Activated B cell treated with CpG ODN at 0.5 μM for 24 hours (primary cell): ENCODE measurements at regions of chr5 and their contacts with region 1.

Region 1: GRCh38 chr5:150000256-150000989 is at the starts of genes HMGXB3 and TIGD6:
- DNase-seq: peak; percentile 87
- ATAC-seq: peak; percentile 85
- H3K4me3 Mint-ChIP-seq: peak within 1 kb of the TSS; percentile 95
- H3K27ac Mint-ChIP-seq: peak within 1 kb of the TSS; percentile 91
- H3K4me1 Mint-ChIP-seq: peaks cover 28% of the 10 kb centered on the region
- H3K27me3 Mint-ChIP-seq: no peaks in the 10 kb centered on the region
- CTCF ChIP-seq: no peak
- total RNA-seq, gene HMGXB3: 28.5 and 36.8 TPM in 2 replicates
- total RNA-seq, gene TIGD6: 3.5 and 4.2 TPM in 2 replicates

Region 2: GRCh38 chr5:149551200-149552037 is 449.0 kb before region 1 on chr5 and contains the start of gene CSNK1A1:
- CTCF ChIA-PET with region 1: no interaction called
- POLR2A ChIA-PET with region 1: interaction called, 14 read pairs
- intact Hi-C with region 1: loop called (anchors 1 kb)
- DNase-seq: peak; percentile 98
- ATAC-seq: peak; percentile 79
- H3K4me3 Mint-ChIP-seq: peak within 1 kb of the TSS; percentile 92
- H3K27ac Mint-ChIP-seq: peak within 1 kb of the TSS; percentile 96
- H3K4me1 Mint-ChIP-seq: peaks cover 36% of the 10 kb centered on the region
- H3K27me3 Mint-ChIP-seq: no peaks in the 10 kb centered on the region
- CTCF ChIP-seq: no peak
- total RNA-seq, gene CSNK1A1: 120 and 133 TPM in 2 replicates

Region 3: DNA sequence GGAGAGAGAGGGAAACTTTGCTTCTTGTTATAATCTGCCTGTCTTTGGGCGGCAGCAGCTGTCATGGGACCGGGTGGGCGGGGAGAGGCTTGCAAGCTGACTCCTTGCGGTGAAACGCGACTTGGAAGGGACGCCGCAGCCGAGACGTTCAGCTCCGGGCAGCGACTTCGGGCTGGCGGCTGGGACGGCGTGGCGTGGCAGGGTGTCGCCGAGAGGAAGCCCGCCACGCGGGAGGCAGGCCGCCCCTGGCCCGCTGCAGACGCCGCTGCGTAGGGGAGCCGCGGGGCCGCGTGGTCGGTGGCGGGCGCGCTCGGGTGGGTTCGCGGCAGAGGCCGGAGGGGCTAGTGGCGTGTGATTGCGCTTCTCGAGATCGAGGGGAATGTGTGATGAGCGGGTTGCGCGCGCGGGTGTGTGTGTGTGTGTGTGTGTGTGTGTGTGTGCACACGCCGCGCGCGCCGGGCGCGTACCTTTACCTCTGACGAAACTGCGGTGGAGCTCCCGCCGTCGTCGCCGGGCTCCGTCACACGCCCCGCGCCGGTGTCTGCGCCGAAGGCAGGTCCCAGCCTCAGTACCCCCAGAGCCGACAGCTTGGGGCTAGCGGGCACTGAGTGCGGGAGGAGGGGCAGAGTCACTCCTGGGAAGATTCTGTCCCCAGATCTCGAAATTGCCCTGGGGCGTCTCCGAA is 268.6 kb before region 1 on chr5:
- CTCF ChIA-PET with region 1: no interaction called
- POLR2A ChIA-PET with region 1: interaction called, 6 read pairs
- intact Hi-C with region 1: loop called (anchors 2 kb)
- DNase-seq: peak; percentile 50
- ATAC-seq: peak; percentile 58
- H3K4me3 Mint-ChIP-seq: peak overlapping the region; percentile 88
- H3K27ac Mint-ChIP-seq: peak overlapping the region; percentile 75
- H3K4me1 Mint-ChIP-seq: peaks cover 12% of the 10 kb centered on the region
- H3K27me3 Mint-ChIP-seq: no peaks in the 10 kb centered on the region
- CTCF ChIP-seq: no peak

Region 4: DNA sequence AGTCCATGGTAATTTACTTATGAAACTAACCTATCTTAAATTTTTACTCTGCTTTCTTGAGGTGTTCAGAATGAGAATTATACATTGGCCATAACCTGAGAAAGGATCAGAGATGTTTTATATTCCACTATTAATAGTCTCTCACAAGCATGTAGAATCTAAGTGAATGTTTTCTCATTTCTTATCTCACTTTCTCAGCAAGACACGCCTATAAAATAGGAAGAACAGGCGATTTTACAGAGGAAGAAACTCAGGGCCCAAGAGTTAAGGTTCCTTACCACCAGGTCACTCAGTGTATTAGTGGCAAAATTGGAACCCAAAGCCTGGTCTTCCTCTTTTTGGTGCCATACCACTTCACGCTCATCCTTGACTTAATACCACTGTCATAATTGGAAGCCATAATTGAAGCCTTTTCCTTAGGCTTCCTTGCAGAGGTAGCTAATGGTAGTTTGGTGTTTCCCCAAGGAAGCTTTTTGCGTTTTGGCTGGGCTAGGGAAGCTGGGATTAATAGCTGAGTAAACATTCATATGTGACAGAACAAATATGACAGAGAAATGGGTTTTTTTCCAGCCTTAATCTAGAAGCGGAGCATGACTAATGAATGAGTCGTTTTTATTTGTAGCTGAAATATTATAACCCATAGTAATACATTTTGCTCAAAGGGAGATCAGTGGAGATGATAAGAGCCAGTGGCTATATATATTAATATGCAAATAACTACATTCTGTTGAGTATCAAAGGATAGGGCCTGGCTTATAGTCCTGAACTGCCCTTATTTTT is 17.0 kb after region 1 on chr5:
- CTCF ChIA-PET with region 1: no interaction called
- POLR2A ChIA-PET with region 1: interaction called, 3 read pairs
- intact Hi-C with region 1: loop called (anchors 1 kb)
- DNase-seq: no peak
- ATAC-seq: no peak
- H3K4me3 Mint-ChIP-seq: no peak overlapping the region
- H3K27ac Mint-ChIP-seq: no peak overlapping the region
- H3K4me1 Mint-ChIP-seq: no peaks in the 10 kb centered on the region
- H3K27me3 Mint-ChIP-seq: no peaks in the 10 kb centered on the region
- CTCF ChIP-seq: no peak

Region 5: GRCh38 chr5:150436141-150436680 is 435.8 kb after region 1 on chr5:
- CTCF ChIA-PET with region 1: no interaction called
- POLR2A ChIA-PET with region 1: no interaction called
- intact Hi-C with region 1: loop called (anchors 5 kb)
- DNase-seq: peak; percentile 76
- ATAC-seq: peak; percentile 95
- H3K4me3 Mint-ChIP-seq: peak overlapping the region; percentile 50
- H3K27ac Mint-ChIP-seq: peak overlapping the region; percentile 92
- H3K4me1 Mint-ChIP-seq: peaks cover 47% of the 10 kb centered on the region
- H3K27me3 Mint-ChIP-seq: no peaks in the 10 kb centered on the region
- CTCF ChIP-seq: no peak

Region 6: GRCh38 chr5:150486402-150487198 is 486.2 kb after region 1 on chr5:
- CTCF ChIA-PET with region 1: no interaction called
- POLR2A ChIA-PET with region 1: no interaction called
- intact Hi-C with region 1: no loop called
- DNase-seq: peak; percentile 76
- ATAC-seq: peak; percentile 38
- H3K4me3 Mint-ChIP-seq: peak overlapping the region; percentile 79
- H3K27ac Mint-ChIP-seq: peak overlapping the region; percentile 85
- H3K4me1 Mint-ChIP-seq: peaks cover 53% of the 10 kb centered on the region
- H3K27me3 Mint-ChIP-seq: no peaks in the 10 kb centered on the region
- CTCF ChIP-seq: no peak